CD8-positive, alpha-beta memory T cell (primary cell): ENCODE measurements at regions of chr9 and their contacts with region 1.

Region 1: GRCh38 chr9:21395778-21396717 is 10.8 kb upstream of the IFNA2 start:
- DNase-seq: peak; percentile 35 to 71 (median 45)
- H3K4me3 ChIP-seq: peak overlapping the region; percentile 44
- H3K4me3 Mint-ChIP-seq: peak overlapping the region; percentile 11 to 76 (median 58)
- H3K27ac ChIP-seq: no peak overlapping the region
- H3K27ac Mint-ChIP-seq: peak overlapping the region in 1 of 8 donors; percentile 40
- H3K4me1 ChIP-seq: peaks cover 4% of the 10 kb centered on the region
- H3K4me1 Mint-ChIP-seq: peaks cover 4 to 9% (median 7%) of the 10 kb centered on the region in 3 donors
- H3K27me3 ChIP-seq: no peaks in the 10 kb centered on the region
- H3K27me3 Mint-ChIP-seq: peaks cover 21 to 75% of the 10 kb centered on the region in 2 donors

Region 2: GRCh38 chr9:20728493-20729220 is 667.4 kb before region 1 on chr9:
- CTCF ChIA-PET with region 1: no interaction called
- POLR2A ChIA-PET with region 1: no interaction called
- DNase-seq: no peak
- H3K4me3 ChIP-seq: no peak overlapping the region
- H3K4me3 Mint-ChIP-seq: no peak overlapping the region
- H3K27ac ChIP-seq: no peak overlapping the region
- H3K27ac Mint-ChIP-seq: no peak overlapping the region
- H3K4me1 ChIP-seq: no peaks in the 10 kb centered on the region
- H3K4me1 Mint-ChIP-seq: peaks cover 12 to 26% (median 22%) of the 10 kb centered on the region in 3 donors
- H3K27me3 ChIP-seq: no peaks in the 10 kb centered on the region
- H3K27me3 Mint-ChIP-seq: no peaks in the 10 kb centered on the region

Region 3: GRCh38 chr9:20906326-20906725 is 489.7 kb before region 1 on chr9:
- CTCF ChIA-PET with region 1: no interaction called
- POLR2A ChIA-PET with region 1: no interaction called
- DNase-seq: no peak
- H3K4me3 ChIP-seq: no peak overlapping the region
- H3K4me3 Mint-ChIP-seq: no peak overlapping the region
- H3K27ac ChIP-seq: no peak overlapping the region
- H3K27ac Mint-ChIP-seq: no peak overlapping the region
- H3K4me1 ChIP-seq: no peaks in the 10 kb centered on the region
- H3K4me1 Mint-ChIP-seq: no peaks in the 10 kb centered on the region
- H3K27me3 ChIP-seq: no peaks in the 10 kb centered on the region
- H3K27me3 Mint-ChIP-seq: no peaks in the 10 kb centered on the region

Region 4: GRCh38 chr9:21160178-21160577 is 235.9 kb before region 1 on chr9:
- CTCF ChIA-PET with region 1: interaction called, 11 read pairs
- POLR2A ChIA-PET with region 1: no interaction called
- DNase-seq: peak in 4 of 5 donors; percentile 5 to 54 (median 33)
- H3K4me3 ChIP-seq: no peak overlapping the region
- H3K4me3 Mint-ChIP-seq: peak overlapping the region; percentile 21 to 83 (median 73)
- H3K27ac ChIP-seq: no peak overlapping the region
- H3K27ac Mint-ChIP-seq: peak overlapping the region in 4 of 8 donors; percentile 24 to 67 (median 60)
- H3K4me1 ChIP-seq: peaks cover 19% of the 10 kb centered on the region
- H3K4me1 Mint-ChIP-seq: peaks cover 51 to 62% (median 53%) of the 10 kb centered on the region in 3 donors
- H3K27me3 ChIP-seq: no peaks in the 10 kb centered on the region
- H3K27me3 Mint-ChIP-seq: no peaks in the 10 kb centered on the region

Region 5: GRCh38 chr9:21239911-21240310 is 156.1 kb before region 1 on chr9 and contains the start of gene IFNA14:
- CTCF ChIA-PET with region 1: interaction called, 11 read pairs
- POLR2A ChIA-PET with region 1: no interaction called
- DNase-seq: no peak
- H3K4me3 ChIP-seq: no peak within 1 kb of the TSS
- H3K4me3 Mint-ChIP-seq: no peak within 1 kb of the TSS
- H3K27ac ChIP-seq: no peak within 1 kb of the TSS
- H3K27ac Mint-ChIP-seq: no peak within 1 kb of the TSS
- H3K4me1 ChIP-seq: peaks cover 5% of the 10 kb centered on the region
- H3K4me1 Mint-ChIP-seq: peaks cover 9 to 13% (median 12%) of the 10 kb centered on the region in 3 donors
- H3K27me3 ChIP-seq: no peaks in the 10 kb centered on the region
- H3K27me3 Mint-ChIP-seq: peaks cover 11 to 45% of the 10 kb centered on the region in 2 donors
- total RNA-seq, gene IFNA14: not detected

Region 6: GRCh38 chr9:21317956-21318923 is 77.8 kb before region 1 on chr9:
- CTCF ChIA-PET with region 1: interaction called, 12 read pairs
- POLR2A ChIA-PET with region 1: interaction called, 3 read pairs
- DNase-seq: peak in 2 of 5 donors; percentile 10 to 28
- H3K4me3 ChIP-seq: no peak overlapping the region
- H3K4me3 Mint-ChIP-seq: no peak overlapping the region
- H3K27ac ChIP-seq: no peak overlapping the region
- H3K27ac Mint-ChIP-seq: peak overlapping the region in 2 of 8 donors; percentile 30 to 87
- H3K4me1 ChIP-seq: no peaks in the 10 kb centered on the region
- H3K4me1 Mint-ChIP-seq: peaks cover 3 to 8% (median 5%) of the 10 kb centered on the region in 3 donors
- H3K27me3 ChIP-seq: no peaks in the 10 kb centered on the region
- H3K27me3 Mint-ChIP-seq: no peaks in the 10 kb centered on the region

Region 7: GRCh38 chr9:21326526-21327139 is 69.4 kb before region 1 on chr9:
- CTCF ChIA-PET with region 1: interaction called, 31 read pairs
- POLR2A ChIA-PET with region 1: no interaction called
- DNase-seq: peak in 2 of 5 donors; percentile 52 to 58
- H3K4me3 ChIP-seq: no peak overlapping the region
- H3K4me3 Mint-ChIP-seq: peak overlapping the region in 2 of 7 donors; percentile 29 to 38
- H3K27ac ChIP-seq: no peak overlapping the region
- H3K27ac Mint-ChIP-seq: peak overlapping the region in 6 of 8 donors; percentile 5 to 77 (median 38)
- H3K4me1 ChIP-seq: peaks cover 26% of the 10 kb centered on the region
- H3K4me1 Mint-ChIP-seq: peaks cover 48 to 69% (median 64%) of the 10 kb centered on the region in 3 donors
- H3K27me3 ChIP-seq: no peaks in the 10 kb centered on the region
- H3K27me3 Mint-ChIP-seq: no peaks in the 10 kb centered on the region

Region 8: DNA sequence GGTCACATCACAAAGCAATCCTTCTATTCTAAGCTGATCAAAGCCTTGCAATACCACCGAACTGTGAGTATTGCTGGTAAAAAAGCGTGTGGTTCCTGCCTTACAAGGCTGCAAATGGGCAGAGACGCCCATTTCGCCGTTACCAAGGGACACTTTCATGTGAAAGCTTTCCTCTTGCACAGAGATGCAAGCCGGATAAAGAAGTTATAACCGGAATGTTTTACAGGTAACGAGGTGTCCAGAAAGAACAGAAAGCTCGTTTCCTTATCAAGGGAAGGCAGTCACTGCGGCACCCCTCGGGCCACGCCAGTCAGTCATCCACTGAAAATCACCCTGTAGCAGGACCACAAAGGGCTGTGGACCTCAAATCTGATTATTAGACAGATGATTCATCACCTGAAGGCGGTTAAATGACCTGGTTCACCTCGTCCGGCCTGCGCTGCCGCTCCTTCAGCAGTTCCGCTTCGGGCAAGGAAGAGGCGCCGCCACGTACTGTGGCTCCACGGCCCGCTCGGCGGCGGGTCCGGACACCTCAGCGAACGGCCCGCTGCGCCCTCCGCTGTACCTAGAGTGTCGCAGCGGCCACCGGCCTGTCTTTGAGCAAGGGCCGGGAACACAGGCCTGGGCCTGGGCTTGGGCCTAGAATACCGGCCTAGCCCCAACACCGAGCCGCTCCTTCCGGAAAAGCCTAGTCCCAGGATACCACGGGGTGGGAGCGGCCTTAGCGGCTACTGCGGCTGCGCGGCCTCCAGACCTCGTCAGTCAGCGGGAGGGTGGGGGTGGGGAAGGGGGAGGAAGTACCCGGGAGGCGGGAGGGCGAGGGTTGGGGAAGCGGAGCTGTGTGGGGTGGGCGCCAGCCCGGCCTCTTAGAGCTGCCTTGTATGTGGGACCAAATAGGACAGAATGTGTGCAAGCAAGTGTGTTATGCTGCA is 61.1 kb before region 1 on chr9 and contains the start of gene KLHL9:
- CTCF ChIA-PET with region 1: interaction called, 25 read pairs
- POLR2A ChIA-PET with region 1: interaction called, 3 read pairs
- DNase-seq: peak; percentile 81 to 92 (median 86)
- H3K4me3 ChIP-seq: peak within 1 kb of the TSS; percentile 84
- H3K4me3 Mint-ChIP-seq: peak within 1 kb of the TSS; percentile 92 to 99 (median 94)
- H3K27ac ChIP-seq: peak within 1 kb of the TSS; percentile 89
- H3K27ac Mint-ChIP-seq: peak within 1 kb of the TSS; percentile 94 to 97 (median 96)
- H3K4me1 ChIP-seq: peaks cover 47% of the 10 kb centered on the region
- H3K4me1 Mint-ChIP-seq: peaks cover 54 to 63% (median 61%) of the 10 kb centered on the region in 3 donors
- H3K27me3 ChIP-seq: peaks cover 5% of the 10 kb centered on the region
- H3K27me3 Mint-ChIP-seq: peaks cover 6 to 8% of the 10 kb centered on the region in 2 donors
- total RNA-seq, gene KLHL9: 16.0 to 16.3 TPM

Region 9: GRCh38 chr9:21381448-21382339 is 14.4 kb before region 1 on chr9:
- CTCF ChIA-PET with region 1: interaction called, 19 read pairs
- POLR2A ChIA-PET with region 1: no interaction called
- DNase-seq: peak in 1 of 5 donors; percentile 44
- H3K4me3 ChIP-seq: no peak overlapping the region
- H3K4me3 Mint-ChIP-seq: peak overlapping the region in 6 of 7 donors; percentile 4 to 72 (median 30)
- H3K27ac ChIP-seq: no peak overlapping the region
- H3K27ac Mint-ChIP-seq: peak overlapping the region in 3 of 8 donors; percentile 27 to 51 (median 43)
- H3K4me1 ChIP-seq: peaks cover 5% of the 10 kb centered on the region
- H3K4me1 Mint-ChIP-seq: peaks cover 6 to 26% (median 21%) of the 10 kb centered on the region in 3 donors
- H3K27me3 ChIP-seq: no peaks in the 10 kb centered on the region
- H3K27me3 Mint-ChIP-seq: peaks cover 14 to 61% of the 10 kb centered on the region in 2 donors

Region 10: DNA sequence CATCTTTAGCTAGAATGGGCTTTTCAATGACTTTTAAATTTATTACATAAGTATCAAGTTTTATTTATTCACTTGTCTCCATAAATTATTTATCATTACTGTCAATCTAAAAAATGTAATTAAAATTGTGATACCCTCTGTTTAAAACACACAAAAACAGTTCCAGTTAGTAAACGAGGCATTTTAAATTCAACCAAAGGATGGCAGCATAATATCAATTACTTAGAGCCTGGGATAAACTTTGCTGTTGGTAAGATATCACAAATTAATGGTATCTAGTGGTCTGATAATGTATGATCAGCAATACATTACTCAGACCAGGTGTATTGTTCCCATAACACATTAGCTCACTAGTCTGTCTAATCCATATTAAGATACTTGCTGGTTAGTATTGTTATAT is 95.7 kb after region 1 on chr9:
- CTCF ChIA-PET with region 1: no interaction called
- POLR2A ChIA-PET with region 1: no interaction called
- DNase-seq: no peak
- H3K4me3 ChIP-seq: no peak overlapping the region
- H3K4me3 Mint-ChIP-seq: no peak overlapping the region
- H3K27ac ChIP-seq: no peak overlapping the region
- H3K27ac Mint-ChIP-seq: no peak overlapping the region
- H3K4me1 ChIP-seq: no peaks in the 10 kb centered on the region
- H3K4me1 Mint-ChIP-seq: peaks cover 6 to 7% (median 7%) of the 10 kb centered on the region in 3 donors
- H3K27me3 ChIP-seq: no peaks in the 10 kb centered on the region
- H3K27me3 Mint-ChIP-seq: peaks cover 3 to 13% of the 10 kb centered on the region in 2 donors